Activated CD4-positive, alpha-beta T cell treated with anti-CD3 and anti-CD28 coated beads, Interleukin-2, amount 10 ng/mL, durations not matched to agents 24 days and 14 days (primary cell): ENCODE measurements at regions of chr3 and their contacts with region 1.

Region 1: GRCh38 chr3:99856437-99857220 is 39.0 kb downstream of the CMSS1 start:
- DNase-seq: no peak
- H3K4me3 Mint-ChIP-seq: no peak overlapping the region
- H3K27ac Mint-ChIP-seq: peak overlapping the region; percentile 21
- H3K4me1 Mint-ChIP-seq: peaks cover 38% of the 10 kb centered on the region
- H3K27me3 Mint-ChIP-seq: no peaks in the 10 kb centered on the region

Region 2: GRCh38 chr3:99602183-99602582 is 254.4 kb before region 1 on chr3:
- intact Hi-C with region 1: no loop called
- DNase-seq: no peak
- H3K4me3 Mint-ChIP-seq: no peak overlapping the region
- H3K27ac Mint-ChIP-seq: no peak overlapping the region
- H3K4me1 Mint-ChIP-seq: no peaks in the 10 kb centered on the region
- H3K27me3 Mint-ChIP-seq: no peaks in the 10 kb centered on the region

Region 3: GRCh38 chr3:99875929-99876841 is 19.6 kb after region 1 on chr3:
- intact Hi-C with region 1: loop called (anchors 2 kb)
- DNase-seq: peak; percentile 91
- H3K4me3 Mint-ChIP-seq: peak overlapping the region; percentile 80
- H3K27ac Mint-ChIP-seq: no peak overlapping the region
- H3K4me1 Mint-ChIP-seq: peaks cover 29% of the 10 kb centered on the region
- H3K27me3 Mint-ChIP-seq: peaks cover 35% of the 10 kb centered on the region